Activated B cell treated with CpG ODN at 0.5 μM for 24 hours (primary cell): ENCODE measurements at regions of chr18 and their contacts with region 1.

Region 1: GRCh38 chr18:67217551-67218166 is 298.9 kb downstream of the DSEL start:
- DNase-seq: no peak
- ATAC-seq: peak; percentile 62
- H3K4me3 Mint-ChIP-seq: no peak overlapping the region
- H3K27ac Mint-ChIP-seq: no peak overlapping the region
- H3K4me1 Mint-ChIP-seq: no peaks in the 10 kb centered on the region
- H3K27me3 Mint-ChIP-seq: no peaks in the 10 kb centered on the region
- CTCF ChIP-seq: peak; percentile 85

Region 2: GRCh38 chr18:68623342-68623741 is 1405.7 kb after region 1 on chr18:
- CTCF ChIA-PET with region 1: no interaction called
- POLR2A ChIA-PET with region 1: no interaction called
- intact Hi-C with region 1: loop called (anchors 1 kb)
- DNase-seq: no peak
- ATAC-seq: no peak
- H3K4me3 Mint-ChIP-seq: no peak overlapping the region
- H3K27ac Mint-ChIP-seq: no peak overlapping the region
- H3K4me1 Mint-ChIP-seq: no peaks in the 10 kb centered on the region
- H3K27me3 Mint-ChIP-seq: no peaks in the 10 kb centered on the region
- CTCF ChIP-seq: no peak

Region 3: DNA sequence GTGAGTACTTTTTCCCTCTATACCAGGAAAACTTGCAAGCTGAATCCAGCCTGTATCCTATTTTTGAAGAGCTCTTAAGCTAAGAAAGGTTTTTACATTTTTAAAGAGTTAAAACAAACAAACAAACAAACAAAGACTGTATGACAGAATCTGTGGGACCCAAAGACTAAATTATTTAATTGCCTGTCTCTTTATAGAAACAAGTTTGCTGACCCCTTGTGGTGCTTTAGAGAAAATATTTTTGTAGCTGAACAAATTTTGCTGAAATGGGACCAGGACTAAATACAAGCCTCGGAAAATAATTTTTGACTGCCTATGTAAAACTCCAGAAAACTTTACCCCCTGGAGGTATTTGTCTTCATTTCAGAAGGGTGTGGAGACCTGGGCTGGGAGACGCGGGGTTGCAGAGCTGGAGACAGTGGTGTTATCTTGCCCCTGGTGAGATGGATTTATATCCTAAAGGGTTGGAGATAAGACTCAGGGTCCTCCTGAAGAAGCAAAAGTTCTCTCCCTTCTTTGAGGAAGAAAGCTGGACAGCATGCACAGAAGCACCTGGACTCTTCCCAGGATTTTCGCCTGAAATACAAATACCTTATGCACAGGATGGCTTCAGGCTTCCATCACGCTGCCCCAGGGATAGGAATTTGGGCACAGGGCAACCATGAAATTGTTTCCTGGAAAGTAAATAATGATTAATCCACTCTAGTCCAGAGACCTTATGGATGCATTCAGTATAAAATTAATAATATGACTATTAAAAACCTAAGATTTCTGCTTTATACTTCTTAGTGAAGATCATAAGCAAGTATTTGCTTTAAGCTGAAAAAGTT is 1442.9 kb after region 1 on chr18:
- CTCF ChIA-PET with region 1: interaction called, 5 read pairs
- POLR2A ChIA-PET with region 1: no interaction called
- intact Hi-C with region 1: loop called (anchors 1 kb)
- DNase-seq: no peak
- ATAC-seq: no peak
- H3K4me3 Mint-ChIP-seq: no peak overlapping the region
- H3K27ac Mint-ChIP-seq: no peak overlapping the region
- H3K4me1 Mint-ChIP-seq: peaks cover 3% of the 10 kb centered on the region
- H3K27me3 Mint-ChIP-seq: peaks cover 2% of the 10 kb centered on the region
- CTCF ChIP-seq: no peak

Region 4: DNA sequence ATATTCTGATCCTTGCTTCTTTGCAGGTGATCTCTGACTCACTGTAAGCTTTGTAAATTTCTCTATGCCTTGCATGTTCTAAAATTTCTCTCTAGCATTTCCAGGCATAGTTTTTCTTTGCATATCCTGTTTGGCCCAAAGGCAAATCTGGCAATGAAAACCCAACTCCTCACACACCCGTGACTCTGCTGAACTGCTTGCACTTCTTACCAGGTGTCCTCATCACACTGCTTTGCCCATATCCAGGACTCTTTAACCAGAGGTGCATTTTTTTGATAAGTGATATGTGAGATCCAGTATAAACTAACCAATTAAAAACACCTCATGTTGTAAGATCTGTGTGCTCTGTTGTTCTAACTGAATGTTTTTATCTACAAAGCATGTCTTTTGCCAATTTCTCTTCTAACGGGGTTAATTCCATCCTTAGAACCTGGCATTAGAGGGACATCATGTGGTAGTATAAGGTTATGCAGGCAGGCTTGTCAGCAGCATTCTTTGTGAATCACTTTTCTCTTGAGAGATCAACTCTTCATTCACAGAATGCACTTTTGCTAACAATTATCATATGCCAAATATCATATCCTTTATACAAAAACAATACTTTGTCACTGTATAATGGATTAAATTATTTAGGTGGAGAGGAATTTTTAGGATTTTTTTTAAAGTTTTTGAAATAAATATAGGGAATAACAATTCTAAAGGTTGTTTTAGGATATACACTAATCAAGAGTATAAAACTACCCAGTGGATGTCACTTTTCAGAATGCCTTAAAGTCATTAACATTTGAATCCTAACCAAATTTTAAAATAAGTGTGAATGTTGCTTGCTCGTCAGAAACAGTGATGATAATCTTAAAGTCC is 1518.1 kb after region 1 on chr18:
- CTCF ChIA-PET with region 1: no interaction called
- POLR2A ChIA-PET with region 1: no interaction called
- intact Hi-C with region 1: loop called (anchors 1 kb)
- DNase-seq: no peak
- ATAC-seq: peak; percentile 49
- H3K4me3 Mint-ChIP-seq: no peak overlapping the region
- H3K27ac Mint-ChIP-seq: no peak overlapping the region
- H3K4me1 Mint-ChIP-seq: no peaks in the 10 kb centered on the region
- H3K27me3 Mint-ChIP-seq: no peaks in the 10 kb centered on the region
- CTCF ChIP-seq: no peak